MCF 10A (cell line): ENCODE measurements at regions of chr12 and their contacts with region 1.

Region 1: GRCh38 chr12:107884769-107885694 is 110.5 kb downstream of the ASCL4 start:
- DNase-seq: peak; percentile 64
- H3K4me3 Mint-ChIP-seq: no peak overlapping the region
- H3K27ac Mint-ChIP-seq: no peak overlapping the region
- H3K4me1 Mint-ChIP-seq: no peaks in the 10 kb centered on the region
- H3K27me3 Mint-ChIP-seq: peaks cover 23% of the 10 kb centered on the region
- CTCF ChIP-seq: peak; percentile 72

Region 2: DNA sequence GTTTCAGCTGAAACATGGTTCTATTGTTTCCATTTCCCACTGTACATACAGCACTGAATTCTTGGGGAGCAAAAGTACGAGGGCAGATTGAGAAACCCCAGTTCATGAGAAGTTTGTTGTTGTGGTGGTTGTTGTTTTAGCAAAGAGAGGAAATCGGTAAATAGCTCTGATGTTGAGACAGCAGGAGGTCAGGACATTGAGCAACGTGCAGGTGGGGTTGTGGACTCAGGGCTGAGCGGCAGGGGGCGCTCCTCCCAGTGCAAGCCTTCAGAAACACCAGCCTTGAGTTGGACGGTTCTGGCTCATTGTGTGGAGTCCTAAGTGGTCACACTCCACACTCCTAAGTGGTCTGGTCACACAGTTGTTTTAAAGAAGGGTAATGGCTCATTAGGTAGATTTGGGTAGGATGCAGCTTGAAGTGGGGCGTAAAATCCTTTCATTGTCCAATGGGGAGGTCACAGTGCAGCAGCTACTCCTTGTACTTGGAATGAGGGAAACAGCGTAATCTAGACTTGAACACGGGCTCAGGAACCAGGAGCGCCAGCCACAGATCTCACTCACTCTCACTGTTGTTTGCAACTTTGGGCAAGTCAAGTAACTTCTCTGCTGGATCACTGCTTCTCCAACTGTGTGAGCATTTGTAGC is 213.9 kb before region 1 on chr12:
- CTCF ChIA-PET with region 1: interaction called, 85 read pairs
- POLR2A ChIA-PET with region 1: no interaction called
- intact Hi-C with region 1: loop called (anchors 1 kb)
- DNase-seq: peak; percentile 60
- H3K4me3 Mint-ChIP-seq: no peak overlapping the region
- H3K27ac Mint-ChIP-seq: no peak overlapping the region
- H3K4me1 Mint-ChIP-seq: peaks cover 12% of the 10 kb centered on the region
- H3K27me3 Mint-ChIP-seq: peaks cover 41% of the 10 kb centered on the region
- CTCF ChIP-seq: peak; percentile 44